Calu3 (cell line): ENCODE measurements at regions of chr17 and their contacts with region 1.

Region 1: DNA sequence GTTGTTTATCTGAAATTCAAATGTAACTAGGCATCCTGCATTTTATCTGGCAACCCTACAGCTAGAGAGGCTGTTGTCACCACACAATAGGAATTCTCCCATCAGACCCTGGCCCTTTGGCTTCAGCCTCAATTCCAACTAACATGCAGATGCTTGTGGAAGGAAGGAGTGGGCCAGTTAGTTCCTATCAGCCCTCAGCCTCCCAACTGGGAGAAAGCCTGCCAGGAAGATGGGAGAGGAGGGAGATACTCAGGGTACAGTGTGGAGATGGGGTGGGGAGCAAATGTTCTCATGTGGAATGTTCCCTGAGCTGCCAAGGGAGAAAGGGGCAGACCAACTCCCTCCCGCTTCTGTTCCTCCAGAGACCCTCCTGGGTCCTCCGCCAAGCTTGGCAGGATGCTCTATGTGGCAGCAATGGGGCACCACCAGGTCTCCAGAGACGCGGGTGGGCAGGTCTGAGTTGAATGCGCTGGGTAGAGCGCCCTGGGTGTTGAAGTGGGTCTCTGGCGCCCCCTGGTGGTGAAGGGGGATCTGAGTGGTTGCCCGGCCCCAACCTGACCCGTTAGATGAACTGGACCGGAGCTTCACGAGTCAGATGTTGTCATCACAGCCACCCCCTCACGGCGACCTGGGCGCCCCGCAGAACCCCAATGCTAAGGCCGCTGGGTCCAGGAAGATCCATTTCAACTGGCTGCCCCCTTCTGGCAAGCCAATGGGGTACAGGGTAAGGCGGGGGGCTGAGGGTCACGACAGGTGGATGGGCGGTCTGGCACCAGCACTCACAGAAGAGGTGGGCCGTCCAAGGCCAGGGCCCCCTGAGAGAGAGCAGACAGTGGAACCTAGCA is 15.2 kb downstream of the GALK1 start:
- DNase-seq: peak; percentile 75
- H3K4me3 Mint-ChIP-seq: no peak overlapping the region
- H3K27ac Mint-ChIP-seq: no peak overlapping the region
- H3K4me1 Mint-ChIP-seq: peaks cover 5% of the 10 kb centered on the region
- H3K27me3 Mint-ChIP-seq: no peaks in the 10 kb centered on the region
- CTCF ChIP-seq: peak; percentile 94

Region 2: DNA sequence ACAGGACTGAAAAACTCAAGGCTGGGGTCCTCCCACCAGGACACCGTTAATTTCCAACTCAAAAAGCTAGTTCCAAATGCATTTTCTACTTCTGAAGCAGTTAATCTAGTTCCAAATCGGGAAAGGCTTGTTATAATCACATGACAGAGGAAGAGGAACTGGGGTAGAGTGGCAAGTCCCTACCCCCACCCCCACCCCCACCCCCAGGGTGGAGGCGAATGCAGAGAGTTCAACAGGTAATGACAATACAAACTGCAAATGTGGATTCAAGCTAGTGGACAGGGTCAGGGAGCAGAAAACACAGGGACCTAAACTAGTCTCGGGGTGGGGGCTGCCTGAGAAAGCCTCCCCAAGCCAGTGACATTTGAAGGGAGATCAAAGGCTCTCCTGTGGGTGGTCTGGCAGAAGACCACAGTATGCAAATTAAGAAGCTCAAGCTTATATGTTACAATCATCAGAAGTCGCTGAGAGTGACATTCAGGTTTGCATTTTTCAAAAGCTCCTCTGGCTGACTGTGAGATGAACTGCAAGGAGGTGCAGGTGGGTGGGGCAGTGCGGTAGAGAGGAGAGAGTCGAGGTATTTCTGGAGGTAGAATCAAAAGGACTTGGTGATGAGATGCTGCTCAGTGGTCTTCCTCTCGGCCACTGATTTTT is 404.1 kb before region 1 on chr17:
- CTCF ChIA-PET with region 1: no interaction called
- intact Hi-C with region 1: no loop called
- DNase-seq: peak; percentile 22
- H3K4me3 Mint-ChIP-seq: peak overlapping the region; percentile 31
- H3K27ac Mint-ChIP-seq: peak overlapping the region; percentile 63
- H3K4me1 Mint-ChIP-seq: peaks cover 62% of the 10 kb centered on the region
- H3K27me3 Mint-ChIP-seq: no peaks in the 10 kb centered on the region
- CTCF ChIP-seq: no peak

Region 3: GRCh38 chr17:75673487-75673886 is 76.3 kb before region 1 on chr17:
- CTCF ChIA-PET with region 1: interaction called, 11 read pairs
- intact Hi-C with region 1: loop called (anchors 2 kb)
- DNase-seq: no peak
- H3K4me3 Mint-ChIP-seq: no peak overlapping the region
- H3K27ac Mint-ChIP-seq: no peak overlapping the region
- H3K4me1 Mint-ChIP-seq: peaks cover 6% of the 10 kb centered on the region
- H3K27me3 Mint-ChIP-seq: no peaks in the 10 kb centered on the region
- CTCF ChIP-seq: no peak

Region 4: GRCh38 chr17:75679706-75680442 is 69.9 kb before region 1 on chr17:
- CTCF ChIA-PET with region 1: interaction called, 11 read pairs
- intact Hi-C with region 1: loop called (anchors 2 kb)
- DNase-seq: peak; percentile 60
- H3K4me3 Mint-ChIP-seq: no peak overlapping the region
- H3K27ac Mint-ChIP-seq: peak overlapping the region; percentile 63
- H3K4me1 Mint-ChIP-seq: peaks cover 40% of the 10 kb centered on the region
- H3K27me3 Mint-ChIP-seq: no peaks in the 10 kb centered on the region
- CTCF ChIP-seq: no peak

Region 5: DNA sequence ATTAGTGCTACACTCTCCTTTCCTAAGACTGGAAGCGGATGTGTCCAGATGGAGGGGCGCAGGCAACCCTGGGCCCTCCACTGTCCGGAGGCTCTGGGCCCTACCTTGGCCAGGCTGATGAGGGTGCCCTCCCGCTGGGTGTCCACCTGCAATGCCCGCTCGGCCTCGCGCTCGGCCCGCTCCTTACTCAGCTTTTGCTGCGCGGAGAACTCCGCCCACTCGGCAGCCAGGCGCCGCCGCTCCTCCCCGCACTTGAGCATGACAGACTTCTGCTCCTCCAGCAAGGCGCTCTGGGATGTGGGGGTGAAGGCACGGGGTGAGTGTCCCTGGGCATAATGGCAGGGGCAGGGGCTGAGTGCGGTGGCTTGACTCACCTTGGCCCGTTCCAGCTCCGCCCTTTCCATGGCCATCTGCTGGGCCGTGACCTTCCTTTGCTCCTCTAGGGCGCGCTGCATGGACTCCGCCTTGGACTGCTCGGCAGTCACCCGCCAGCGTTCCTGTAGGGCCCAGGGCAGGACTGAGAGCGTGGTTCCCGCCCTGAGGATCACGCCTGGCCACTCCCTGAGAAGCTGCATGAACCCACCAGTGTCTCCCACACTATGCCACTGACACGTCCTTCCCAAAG is 165.0 kb after region 1 on chr17:
- CTCF ChIA-PET with region 1: no interaction called
- intact Hi-C with region 1: no loop called
- DNase-seq: no peak
- H3K4me3 Mint-ChIP-seq: no peak overlapping the region
- H3K27ac Mint-ChIP-seq: no peak overlapping the region
- H3K4me1 Mint-ChIP-seq: no peaks in the 10 kb centered on the region
- H3K27me3 Mint-ChIP-seq: no peaks in the 10 kb centered on the region
- CTCF ChIP-seq: no peak